ENCODE measurements at regions of chr13 and their contacts with region 1.

Region 1: DNA sequence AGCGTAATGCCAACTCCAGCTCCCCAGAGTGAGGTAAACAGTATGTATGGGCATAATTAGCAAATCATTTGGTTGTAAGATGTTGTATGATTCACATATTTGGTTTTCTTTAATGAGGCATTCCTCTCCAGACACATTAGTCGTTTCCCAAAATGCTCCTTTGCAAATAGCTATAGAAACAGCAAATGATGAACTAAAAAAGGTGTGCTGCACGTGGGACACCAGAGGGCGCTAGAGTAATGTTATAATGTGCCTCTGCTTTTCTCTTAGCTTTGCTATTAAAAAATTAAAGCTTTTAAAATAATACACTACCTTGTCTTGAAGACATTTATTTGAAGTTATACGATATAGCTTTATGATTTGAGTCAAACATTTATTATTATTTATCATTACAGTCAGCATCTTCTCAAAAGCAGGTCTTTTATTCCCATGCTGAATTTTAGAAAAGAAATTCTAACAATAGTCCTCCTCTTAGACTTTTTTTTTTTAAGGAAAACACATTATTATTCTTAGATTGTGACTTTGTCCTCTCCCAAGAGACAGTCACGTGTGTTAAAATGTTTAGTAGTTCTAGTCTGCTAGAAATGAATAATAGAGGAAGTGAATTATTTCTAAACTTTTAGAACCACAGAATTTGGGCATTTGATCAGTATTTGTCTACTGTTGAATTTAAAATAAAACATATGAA is 121.6 kb upstream of the FRY start:
- DNase-seq: peak; percentile 56
- H3K4me3 Mint-ChIP-seq: no peak overlapping the region
- H3K27ac Mint-ChIP-seq: no peak overlapping the region
- H3K4me1 Mint-ChIP-seq: peaks cover 36% of the 10 kb centered on the region
- H3K27me3 Mint-ChIP-seq: no peaks in the 10 kb centered on the region

Region 2: DNA sequence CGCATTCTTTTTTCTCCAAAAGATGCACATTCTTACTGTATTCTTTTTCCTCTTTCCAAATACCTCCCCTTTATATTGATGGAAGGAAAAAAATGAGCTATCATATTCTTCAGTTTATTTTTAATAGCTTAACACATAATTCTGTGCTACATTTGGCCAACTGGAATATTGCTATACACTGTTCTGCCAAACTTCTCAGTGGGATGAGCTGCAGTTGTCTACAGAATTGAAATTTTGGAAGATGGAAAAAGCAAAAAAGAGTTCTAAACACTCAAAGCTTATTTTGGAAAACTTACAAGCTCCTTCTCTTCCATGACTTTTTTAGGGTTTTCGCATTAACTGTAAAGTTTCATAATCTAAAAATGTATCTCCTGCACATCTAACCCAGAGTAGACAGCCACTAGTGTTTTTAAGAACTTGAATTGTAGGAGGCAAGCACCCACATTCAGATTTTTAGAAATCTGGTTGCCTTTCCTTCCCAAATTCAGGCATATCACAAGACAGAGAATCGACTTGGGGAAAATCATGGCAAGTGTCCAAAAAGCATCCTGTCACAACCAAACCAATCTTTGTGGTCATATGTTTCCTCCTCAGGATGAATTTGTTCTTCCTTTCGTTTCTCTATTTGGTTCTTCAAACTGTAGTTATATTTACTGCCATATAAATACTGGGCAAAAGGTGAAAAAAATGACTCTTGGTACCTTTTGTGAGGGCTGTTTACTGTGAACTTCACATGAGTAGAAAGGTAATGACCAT is 10.1 kb after region 1 on chr13:
- CTCF ChIA-PET with region 1: interaction called, 34 read pairs
- POLR2A ChIA-PET with region 1: no interaction called
- DNase-seq: no peak
- H3K4me3 Mint-ChIP-seq: no peak overlapping the region
- H3K27ac Mint-ChIP-seq: no peak overlapping the region
- H3K4me1 Mint-ChIP-seq: peaks cover 13% of the 10 kb centered on the region
- H3K27me3 Mint-ChIP-seq: peaks cover 2% of the 10 kb centered on the region

Region 3: DNA sequence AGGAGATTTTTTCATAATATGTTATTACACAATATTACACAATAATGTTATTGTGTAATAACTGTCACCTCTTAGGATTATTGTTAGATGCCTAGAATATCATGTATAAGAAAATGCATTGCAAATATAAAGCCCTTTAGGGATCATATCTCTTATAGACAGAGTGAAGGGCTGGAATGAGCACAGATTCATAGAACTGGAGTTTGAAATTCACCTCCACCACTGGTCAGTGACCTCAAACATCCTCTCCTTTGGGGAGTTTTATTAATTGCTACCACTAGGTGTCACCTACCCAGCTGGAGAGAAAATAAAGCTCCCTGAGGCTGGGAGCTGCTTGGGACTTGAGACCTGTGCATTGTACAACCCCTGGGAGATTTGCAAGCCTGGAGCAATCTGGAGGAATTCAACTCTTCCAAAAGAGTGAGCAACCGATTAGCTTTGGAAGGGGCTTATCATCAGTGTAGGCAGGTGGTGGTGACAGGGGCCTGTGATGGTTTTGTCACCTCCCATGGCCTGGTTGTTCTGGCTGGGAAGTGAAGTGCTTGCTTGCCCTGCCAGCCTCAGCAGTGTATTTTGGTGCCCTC is 91.3 kb after region 1 on chr13:
- CTCF ChIA-PET with region 1: interaction called, 11 read pairs
- POLR2A ChIA-PET with region 1: no interaction called
- DNase-seq: peak; percentile 17
- H3K4me3 Mint-ChIP-seq: no peak overlapping the region
- H3K27ac Mint-ChIP-seq: no peak overlapping the region
- H3K4me1 Mint-ChIP-seq: no peaks in the 10 kb centered on the region
- H3K27me3 Mint-ChIP-seq: no peaks in the 10 kb centered on the region

Region 4: GRCh38 chr13:32246468-32246867 is 336.5 kb after region 1 on chr13:
- CTCF ChIA-PET with region 1: interaction called, 18 read pairs
- POLR2A ChIA-PET with region 1: no interaction called
- DNase-seq: peak; percentile 50
- H3K4me3 Mint-ChIP-seq: no peak overlapping the region
- H3K27ac Mint-ChIP-seq: no peak overlapping the region
- H3K4me1 Mint-ChIP-seq: peaks cover 11% of the 10 kb centered on the region
- H3K27me3 Mint-ChIP-seq: no peaks in the 10 kb centered on the region